ENCODE measurements at regions of chr7 and their contacts with region 1.

Region 1: GRCh38 chr7:35723011-35723410 is 28.1 kb upstream of the HERPUD2 start:
- DNase-seq: no peak
- H3K4me3 Mint-ChIP-seq: no peak overlapping the region
- H3K27ac Mint-ChIP-seq: peak overlapping the region; percentile 81
- H3K4me1 Mint-ChIP-seq: peaks cover 52% of the 10 kb centered on the region
- H3K27me3 Mint-ChIP-seq: no peaks in the 10 kb centered on the region

Region 2: GRCh38 chr7:35701287-35701900 is 21.6 kb before region 1 on chr7:
- intact Hi-C with region 1: loop called (anchors 2 kb)
- DNase-seq: no peak
- H3K4me3 Mint-ChIP-seq: no peak overlapping the region
- H3K27ac Mint-ChIP-seq: no peak overlapping the region
- H3K4me1 Mint-ChIP-seq: peaks cover 41% of the 10 kb centered on the region
- H3K27me3 Mint-ChIP-seq: no peaks in the 10 kb centered on the region

Region 3: DNA sequence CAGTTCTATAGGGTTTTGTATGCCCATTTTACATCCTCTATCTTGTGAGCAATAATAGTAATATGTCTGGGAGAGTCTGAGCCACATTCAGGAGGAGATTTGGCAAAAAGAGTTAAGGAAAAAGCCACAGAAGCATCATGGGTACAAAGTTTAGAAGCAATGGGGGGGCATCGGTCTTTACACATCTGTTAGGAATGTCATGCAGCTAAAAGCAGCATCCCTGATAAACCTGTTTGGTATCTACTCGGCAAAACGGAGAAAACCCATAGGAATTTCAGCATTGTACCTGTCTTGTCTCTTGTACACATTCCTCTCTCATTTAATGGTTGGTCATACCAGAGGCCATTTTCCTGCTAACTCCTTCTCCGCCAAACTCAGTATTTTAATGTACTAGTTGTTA is 15.6 kb before region 1 on chr7:
- intact Hi-C with region 1: loop called (anchors 1 kb)
- DNase-seq: no peak
- H3K4me3 Mint-ChIP-seq: no peak overlapping the region
- H3K27ac Mint-ChIP-seq: no peak overlapping the region
- H3K4me1 Mint-ChIP-seq: peaks cover 21% of the 10 kb centered on the region
- H3K27me3 Mint-ChIP-seq: no peaks in the 10 kb centered on the region

Region 4: DNA sequence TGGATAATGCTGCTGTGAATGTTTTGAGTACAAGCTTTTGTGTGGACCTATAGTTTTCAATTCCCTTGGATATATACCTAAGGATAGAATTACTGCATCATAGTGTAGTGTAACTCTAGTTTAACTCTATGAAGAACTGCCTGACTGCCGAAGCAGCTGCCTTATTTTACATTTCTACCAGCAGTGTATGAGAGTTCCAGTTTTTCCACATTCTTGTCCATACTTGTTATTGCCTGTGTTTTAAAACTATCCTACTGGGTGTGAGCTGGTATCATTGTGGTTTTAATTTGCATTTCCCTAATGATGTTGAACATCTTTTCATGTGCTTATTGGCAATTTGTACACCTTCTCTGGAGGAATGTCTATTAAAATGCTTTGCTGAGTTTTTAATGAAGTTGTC is 93.5 kb after region 1 on chr7:
- intact Hi-C with region 1: loop called (anchors 1 kb)
- DNase-seq: no peak
- H3K4me3 Mint-ChIP-seq: no peak overlapping the region
- H3K27ac Mint-ChIP-seq: no peak overlapping the region
- H3K4me1 Mint-ChIP-seq: peaks cover 59% of the 10 kb centered on the region
- H3K27me3 Mint-ChIP-seq: no peaks in the 10 kb centered on the region

Region 5: GRCh38 chr7:35865287-35865686 is 142.3 kb after region 1 on chr7:
- intact Hi-C with region 1: no loop called
- DNase-seq: no peak
- H3K4me3 Mint-ChIP-seq: no peak overlapping the region
- H3K27ac Mint-ChIP-seq: no peak overlapping the region
- H3K4me1 Mint-ChIP-seq: peaks cover 20% of the 10 kb centered on the region
- H3K27me3 Mint-ChIP-seq: no peaks in the 10 kb centered on the region

Measured in activated T-helper 2 cell treated with anti-CD3 and anti-CD28 coated beads, Interferon-gamma antibody, Interleukin-2, Interleukin-4, amounts not matched to agents 10 μg/mL and 5 μg/mL and 100 μg/mL, durations not matched to agents 14 hours and 24 hours and 36 hours (primary cell).